Caco-2 (cell line): ENCODE measurements at regions of chr1 and their contacts with region 1.

Region 1: DNA sequence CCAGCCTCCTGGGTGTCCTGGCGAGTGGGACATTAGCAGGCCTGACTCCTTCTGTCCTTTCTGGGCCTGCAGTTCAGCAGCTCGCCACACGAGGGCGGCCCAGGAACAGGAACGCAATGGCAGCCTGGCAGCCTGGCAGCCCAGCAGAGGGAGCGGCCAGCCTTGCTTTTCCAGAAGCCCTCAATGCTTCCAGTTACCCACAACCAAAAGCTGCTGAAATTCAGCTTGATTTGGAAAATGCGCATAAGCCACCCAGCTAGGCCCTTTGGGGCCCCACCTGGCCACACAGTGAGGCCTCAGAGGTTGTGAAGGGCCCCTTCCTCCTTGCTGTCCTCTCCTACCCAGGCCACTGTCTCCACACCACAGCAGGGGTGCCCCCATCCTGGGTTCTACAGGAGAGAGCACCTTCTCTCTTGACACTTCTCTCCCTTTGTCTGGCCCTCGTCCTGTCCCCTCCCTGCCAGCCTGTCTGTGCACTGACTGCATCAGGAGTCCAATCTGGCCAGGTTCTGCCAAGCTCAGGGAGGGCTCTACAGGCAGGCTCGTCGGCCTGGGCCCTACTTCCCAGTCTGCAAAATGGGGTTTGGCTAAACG is 103.4 kb upstream of the VAMP3 start:
- DNase-seq: peak; percentile 79 to 91
- H3K4me3 ChIP-seq: no peak overlapping the region
- H3K4me3 Mint-ChIP-seq: no peak overlapping the region
- H3K27ac Mint-ChIP-seq: no peak overlapping the region
- H3K4me1 ChIP-seq: peaks cover 3% of the 10 kb centered on the region; the same call in 1 of the 2 replicates
- H3K4me1 Mint-ChIP-seq: peaks cover 6% of the 10 kb centered on the region
- H3K27me3 ChIP-seq: no peaks in the 10 kb centered on the region
- H3K27me3 Mint-ChIP-seq: no peaks in the 10 kb centered on the region
- CTCF ChIP-seq: peak; percentile 96 to 99

Region 2: DNA sequence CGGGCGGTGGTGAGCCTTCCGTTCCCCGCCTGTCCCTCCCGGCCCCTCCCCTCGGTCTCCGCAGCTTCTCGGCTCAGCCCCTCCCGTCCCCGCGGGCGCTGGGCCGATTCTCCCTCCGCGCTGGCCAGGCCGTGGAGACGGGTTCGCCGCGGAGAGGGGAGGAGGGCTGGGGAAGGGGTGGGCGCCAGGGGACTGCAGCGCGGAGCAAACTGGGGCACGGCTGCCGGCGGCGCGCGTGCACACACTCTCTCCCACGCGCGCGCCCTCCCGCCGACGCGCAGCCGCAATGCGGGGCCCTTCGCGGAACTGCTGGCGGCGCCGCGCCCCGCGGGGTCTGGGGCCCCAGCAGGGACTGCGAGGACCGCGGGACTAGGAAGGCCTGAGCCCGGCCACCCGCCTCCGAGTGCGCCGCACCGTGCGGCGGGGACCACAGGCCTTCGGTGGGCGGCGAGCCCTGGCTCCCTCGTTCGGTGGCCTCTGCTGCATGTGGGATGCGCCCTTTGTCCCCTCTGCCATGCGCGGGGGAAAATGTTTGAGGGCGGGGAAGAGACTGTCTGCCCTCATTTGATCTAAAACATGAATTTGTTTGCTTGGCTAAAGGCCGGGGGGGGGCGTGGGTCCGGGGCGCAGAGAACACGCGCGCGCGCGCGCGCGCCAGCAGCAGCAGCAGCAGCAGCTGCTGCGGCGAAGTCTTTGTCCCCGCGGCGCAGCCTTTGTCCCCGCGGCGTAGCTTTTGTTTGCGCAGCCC is 12.7 kb after region 1 on chr1:
- CTCF ChIA-PET with region 1: interaction called, 20 read pairs
- POLR2A ChIA-PET with region 1: no interaction called
- intact Hi-C with region 1: loop called (anchors 1 kb)
- DNase-seq: peak in 1 of 2 experiments; percentile 57
- H3K4me3 ChIP-seq: peak overlapping the region; percentile 76
- H3K4me3 Mint-ChIP-seq: peak overlapping the region; percentile 71
- H3K27ac Mint-ChIP-seq: no peak overlapping the region
- H3K4me1 ChIP-seq: no peaks in the 10 kb centered on the region
- H3K4me1 Mint-ChIP-seq: no peaks in the 10 kb centered on the region
- H3K27me3 ChIP-seq: no peaks in the 10 kb centered on the region
- H3K27me3 Mint-ChIP-seq: peaks cover 4% of the 10 kb centered on the region
- CTCF ChIP-seq: no peak

Region 3: GRCh38 chr1:7704214-7705047 is 36.7 kb after region 1 on chr1:
- CTCF ChIA-PET with region 1: interaction called, 7 read pairs
- POLR2A ChIA-PET with region 1: no interaction called
- intact Hi-C with region 1: loop called (anchors 5 kb)
- DNase-seq: peak; percentile 92 to 97
- H3K4me3 ChIP-seq: peak overlapping the region; percentile 73
- H3K4me3 Mint-ChIP-seq: peak overlapping the region; percentile 69
- H3K27ac Mint-ChIP-seq: no peak overlapping the region
- H3K4me1 ChIP-seq: no peaks in the 10 kb centered on the region
- H3K4me1 Mint-ChIP-seq: peaks cover 13% of the 10 kb centered on the region
- H3K27me3 ChIP-seq: no peaks in the 10 kb centered on the region
- H3K27me3 Mint-ChIP-seq: no peaks in the 10 kb centered on the region
- CTCF ChIP-seq: no peak

Region 4: DNA sequence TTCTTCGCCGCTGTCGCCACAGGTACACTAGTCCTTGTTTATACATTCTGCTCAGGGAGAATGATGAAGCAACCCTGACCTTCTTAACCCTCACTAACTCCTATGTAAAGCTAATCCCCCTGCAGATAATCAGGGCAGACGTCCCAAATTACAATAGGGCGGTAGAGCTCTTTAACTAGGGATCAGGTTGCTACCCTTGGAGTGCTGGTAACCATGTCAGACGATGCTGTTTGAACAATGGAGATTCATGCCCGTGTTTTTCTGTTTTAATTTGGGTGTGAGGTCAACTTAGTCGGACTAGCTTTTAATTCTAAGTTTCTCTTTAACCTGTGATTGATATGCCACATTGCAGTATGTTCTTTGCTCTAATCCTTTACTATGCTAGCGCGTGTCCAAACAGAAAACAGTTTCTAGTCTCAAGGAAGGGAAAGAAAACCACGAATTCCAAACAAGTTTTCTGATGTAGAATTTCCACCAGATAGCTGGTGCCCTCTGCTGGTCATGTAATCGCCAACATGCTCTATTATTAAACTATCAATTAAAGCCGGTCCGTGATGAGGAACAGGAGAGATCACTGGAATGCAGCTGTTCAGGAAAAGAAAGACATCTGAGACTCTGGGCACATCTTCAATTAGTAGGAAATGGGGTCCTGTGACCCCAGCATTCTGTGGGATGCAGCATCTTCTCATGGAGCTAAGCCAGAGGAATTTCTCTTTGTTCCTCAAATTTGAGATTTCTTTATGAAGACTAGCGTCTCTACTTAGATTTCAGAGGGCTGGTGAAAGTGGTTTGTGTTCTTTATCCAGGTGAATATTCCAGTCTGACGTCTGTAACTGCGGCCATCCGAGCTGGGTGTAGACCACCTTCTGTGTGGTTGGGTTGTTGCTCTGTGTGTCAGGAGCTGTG is 85.0 kb after region 1 on chr1:
- CTCF ChIA-PET with region 1: interaction called, 200 read pairs
- POLR2A ChIA-PET with region 1: interaction called, 3 read pairs
- intact Hi-C with region 1: loop called (anchors 1 kb)
- DNase-seq: peak; percentile 43 to 62
- H3K4me3 ChIP-seq: peak overlapping the region; percentile 21; the same call in 1 of the 2 replicates
- H3K4me3 Mint-ChIP-seq: peak overlapping the region; percentile 57
- H3K27ac Mint-ChIP-seq: no peak overlapping the region
- H3K4me1 ChIP-seq: no peaks in the 10 kb centered on the region
- H3K4me1 Mint-ChIP-seq: peaks cover 7% of the 10 kb centered on the region
- H3K27me3 ChIP-seq: no peaks in the 10 kb centered on the region
- H3K27me3 Mint-ChIP-seq: no peaks in the 10 kb centered on the region
- CTCF ChIP-seq: peak; percentile 65 to 75

Region 5: GRCh38 chr1:7902478-7903085 is 234.9 kb after region 1 on chr1:
- CTCF ChIA-PET with region 1: interaction called, 4 read pairs
- POLR2A ChIA-PET with region 1: no interaction called
- intact Hi-C with region 1: loop called (anchors 1 kb)
- DNase-seq: peak; percentile 66 to 79
- H3K4me3 ChIP-seq: no peak overlapping the region
- H3K4me3 Mint-ChIP-seq: no peak overlapping the region
- H3K27ac Mint-ChIP-seq: no peak overlapping the region
- H3K4me1 ChIP-seq: no peaks in the 10 kb centered on the region
- H3K4me1 Mint-ChIP-seq: no peaks in the 10 kb centered on the region
- H3K27me3 ChIP-seq: no peaks in the 10 kb centered on the region
- H3K27me3 Mint-ChIP-seq: no peaks in the 10 kb centered on the region
- CTCF ChIP-seq: peak; percentile 74 to 78